ENCODE measurements at regions of chr3 and their contacts with region 1.

Region 1: DNA sequence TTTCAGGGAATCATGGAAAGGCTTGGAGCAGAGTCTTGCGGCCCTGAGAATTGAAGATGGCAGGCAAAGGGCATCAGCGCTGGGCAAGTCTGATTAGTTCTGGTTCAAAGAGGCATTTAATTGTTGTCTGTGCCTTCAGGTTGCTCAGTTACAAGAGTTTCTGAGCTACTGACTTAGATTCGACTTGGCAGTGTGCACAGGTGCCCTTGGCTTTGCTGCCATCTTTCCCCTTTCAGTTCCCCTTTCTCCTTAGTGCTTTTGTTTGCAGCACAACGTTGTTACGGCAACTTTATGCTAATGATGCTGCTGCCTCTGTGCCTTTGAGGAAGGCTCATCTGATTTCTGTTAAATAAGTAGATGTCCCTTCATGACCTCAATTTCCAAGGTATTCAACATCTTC is 12.5 kb downstream of the P2RY14 start:
- DNase-seq: no peak
- H3K4me3 ChIP-seq: no peak overlapping the region
- CTCF ChIP-seq: no peak

Region 2: GRCh38 chr3:151219056-151219455 is 46.8 kb before region 1 on chr3:
- in situ Hi-C with region 1: no loop called
- DNase-seq: no peak
- H3K4me3 ChIP-seq: no peak overlapping the region
- CTCF ChIP-seq: no peak

Region 3: DNA sequence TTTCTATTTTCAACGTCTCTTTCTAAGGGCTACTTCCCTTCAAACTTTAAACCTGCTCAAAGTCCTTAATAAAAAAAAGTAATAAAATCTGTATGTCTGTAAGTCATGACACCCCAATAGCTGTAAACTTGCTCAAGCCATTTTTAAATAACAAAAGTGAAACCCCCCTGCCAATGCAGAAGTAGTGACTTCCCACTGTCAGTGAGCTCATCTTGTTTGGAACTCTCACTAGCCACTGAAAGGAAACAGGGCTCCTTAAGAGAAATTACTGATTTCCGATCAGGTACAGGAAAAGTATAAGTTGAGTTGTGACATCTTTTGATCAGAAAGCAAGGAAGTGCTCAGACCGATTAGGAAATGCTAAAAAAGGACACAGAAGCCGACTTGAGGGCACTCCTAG is 35.2 kb before region 1 on chr3:
- in situ Hi-C with region 1: loop called (anchors 5 kb)
- DNase-seq: no peak
- H3K4me3 ChIP-seq: no peak overlapping the region
- CTCF ChIP-seq: no peak

Region 4: DNA sequence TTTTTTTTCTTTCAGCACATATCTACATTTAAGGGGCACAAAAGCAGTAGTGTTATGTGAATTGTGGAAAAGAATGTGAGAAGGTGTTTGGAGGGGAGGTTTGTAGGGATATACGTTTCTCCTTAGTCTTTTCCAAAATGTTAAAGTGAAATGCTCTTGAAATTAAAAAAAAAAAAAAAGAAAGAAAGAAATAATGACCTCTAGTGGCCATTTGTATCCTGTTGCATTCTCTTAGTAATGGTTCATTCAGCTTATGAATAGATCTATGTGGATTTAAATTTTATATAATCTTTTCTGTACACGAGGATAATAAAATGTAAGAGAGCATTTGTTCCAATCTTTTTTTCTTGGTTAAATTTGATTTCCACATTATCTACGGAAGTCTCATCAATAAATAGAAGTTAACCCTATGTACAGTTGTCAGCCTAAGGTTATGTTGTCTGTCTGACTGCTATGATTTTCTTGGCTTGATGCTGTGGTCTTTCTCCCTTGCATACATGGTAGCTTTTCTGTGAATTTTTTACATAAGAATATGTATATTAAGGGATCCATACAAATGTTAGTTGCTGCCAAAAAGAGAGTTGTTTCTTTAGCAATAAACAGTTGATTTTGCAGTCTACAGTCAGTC is 61.8 kb after region 1 on chr3:
- in situ Hi-C with region 1: no loop called
- DNase-seq: no peak
- H3K4me3 ChIP-seq: no peak overlapping the region
- CTCF ChIP-seq: peak; percentile 9

Measured in astrocyte of the cerebellum (primary cell).